Activated B cell treated with CpG ODN at 0.5 μM for 24 hours (primary cell): ENCODE measurements at regions of chr15 and their contacts with region 1.

Region 1: GRCh38 chr15:99275525-99276128 is 24.3 kb downstream of the LRRC28 start:
- DNase-seq: no peak
- ATAC-seq: peak; percentile 34
- H3K4me3 Mint-ChIP-seq: no peak overlapping the region
- H3K27ac Mint-ChIP-seq: no peak overlapping the region
- H3K4me1 Mint-ChIP-seq: peaks cover 10% of the 10 kb centered on the region
- H3K27me3 Mint-ChIP-seq: no peaks in the 10 kb centered on the region
- CTCF ChIP-seq: no peak

Region 2: GRCh38 chr15:99733268-99734039 is 457.8 kb after region 1 on chr15 and contains the start of gene LYSMD4:
- CTCF ChIA-PET with region 1: interaction called, 8 read pairs
- POLR2A ChIA-PET with region 1: no interaction called
- intact Hi-C with region 1: loop called (anchors 1 kb)
- DNase-seq: peak; percentile 95
- ATAC-seq: peak; percentile 99
- H3K4me3 Mint-ChIP-seq: peak within 1 kb of the TSS; percentile 85
- H3K27ac Mint-ChIP-seq: peak within 1 kb of the TSS; percentile 83
- H3K4me1 Mint-ChIP-seq: peaks cover 14% of the 10 kb centered on the region
- H3K27me3 Mint-ChIP-seq: no peaks in the 10 kb centered on the region
- CTCF ChIP-seq: no peak
- total RNA-seq, gene LYSMD4: 4.7 and 6.1 TPM in 2 replicates

Region 3: DNA sequence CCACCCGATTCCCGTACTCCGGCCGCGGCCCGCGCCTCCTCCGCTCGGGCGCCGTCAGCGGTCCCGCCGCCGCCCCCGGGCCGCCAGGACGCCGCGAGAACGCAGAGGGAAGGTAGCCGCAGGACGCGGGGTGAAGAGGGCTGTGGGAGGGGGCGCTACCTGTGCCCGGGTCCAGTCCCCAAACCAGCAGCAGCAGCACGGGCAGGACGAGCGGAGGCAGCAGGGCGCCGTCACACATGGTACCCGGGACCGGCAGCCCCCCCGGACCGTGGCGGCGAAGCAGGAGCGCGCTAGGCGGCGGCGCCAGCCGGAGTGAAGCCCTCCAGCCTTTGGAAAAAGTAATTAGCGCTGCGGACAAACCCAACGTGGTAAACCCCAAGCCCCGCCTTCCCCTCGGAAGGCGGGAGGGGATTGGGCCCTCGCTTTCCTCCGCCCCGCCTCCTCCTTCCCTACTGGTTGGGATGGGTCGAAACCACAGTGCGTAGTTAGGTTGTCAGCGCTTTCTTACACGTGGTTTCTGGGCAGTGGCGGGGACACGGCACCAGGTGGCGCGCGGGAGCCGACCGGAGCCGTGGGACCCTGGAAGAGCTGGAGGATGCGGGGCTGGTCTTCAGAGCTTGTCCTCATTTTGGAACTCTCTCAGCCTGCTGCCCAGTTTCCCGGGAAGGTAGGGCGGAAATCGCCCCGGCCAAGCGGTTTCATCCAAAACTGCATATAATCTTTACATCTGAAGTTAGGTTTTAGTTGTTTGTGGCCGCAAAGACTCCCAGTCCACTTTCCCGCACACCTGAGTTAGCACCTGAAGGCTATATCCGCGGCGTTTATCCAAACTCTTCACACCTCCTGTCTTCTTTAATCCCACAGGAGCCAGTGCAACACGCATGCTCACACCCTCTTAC is 1066.3 kb after region 1 on chr15 and contains the start of gene ADAMTS17:
- CTCF ChIA-PET with region 1: no interaction called
- POLR2A ChIA-PET with region 1: no interaction called
- intact Hi-C with region 1: loop called (anchors 5 kb)
- DNase-seq: peak; percentile 70
- ATAC-seq: peak; percentile 99
- H3K4me3 Mint-ChIP-seq: peak within 1 kb of the TSS; percentile 50
- H3K27ac Mint-ChIP-seq: no peak within 1 kb of the TSS
- H3K4me1 Mint-ChIP-seq: peaks cover 9% of the 10 kb centered on the region
- H3K27me3 Mint-ChIP-seq: peaks cover 29% of the 10 kb centered on the region
- CTCF ChIP-seq: no peak
- total RNA-seq, gene ADAMTS17: 1.6 TPM in 1 of 2 replicates, not detected in the other

Region 4: GRCh38 chr15:100572362-100572983 is 1296.8 kb after region 1 on chr15:
- CTCF ChIA-PET with region 1: interaction called, 8 read pairs
- POLR2A ChIA-PET with region 1: no interaction called
- intact Hi-C with region 1: loop called (anchors 2 kb)
- DNase-seq: no peak
- ATAC-seq: peak; percentile 31
- H3K4me3 Mint-ChIP-seq: no peak overlapping the region
- H3K27ac Mint-ChIP-seq: no peak overlapping the region
- H3K4me1 Mint-ChIP-seq: peaks cover 3% of the 10 kb centered on the region
- H3K27me3 Mint-ChIP-seq: no peaks in the 10 kb centered on the region
- CTCF ChIP-seq: no peak

Region 5: DNA sequence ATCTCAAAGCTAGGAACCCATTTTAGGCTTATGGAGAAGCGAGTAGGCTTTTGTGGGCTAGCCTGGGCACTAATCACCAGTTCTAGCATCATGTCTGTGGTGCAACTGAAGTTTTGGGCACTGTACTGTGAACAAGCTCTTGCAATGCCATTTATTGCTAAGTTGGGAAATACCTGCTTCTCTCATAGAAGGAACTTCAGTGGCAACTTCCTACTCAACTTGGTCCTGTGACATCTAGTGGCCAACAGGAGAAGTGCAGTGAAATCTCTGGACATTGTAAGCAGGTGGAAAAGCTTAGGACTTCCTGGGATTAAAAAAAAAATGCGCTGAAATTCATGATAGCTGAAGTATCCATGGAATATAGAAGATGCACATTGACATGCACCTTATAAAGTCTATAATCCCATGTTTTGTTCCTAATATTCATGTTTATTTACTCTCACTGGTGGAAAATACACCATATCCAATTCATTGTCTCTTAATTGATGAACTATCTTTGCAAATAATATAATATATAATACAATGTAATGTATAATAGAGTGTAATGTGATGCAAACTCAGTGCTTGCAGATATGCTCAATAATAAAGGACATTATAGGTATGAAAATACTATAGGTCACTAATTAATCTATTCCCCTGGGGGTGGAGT is 1597.5 kb after region 1 on chr15:
- CTCF ChIA-PET with region 1: interaction called, 5 read pairs
- POLR2A ChIA-PET with region 1: no interaction called
- intact Hi-C with region 1: loop called (anchors 5 kb)
- DNase-seq: no peak
- ATAC-seq: peak; percentile 71
- H3K4me3 Mint-ChIP-seq: no peak overlapping the region
- H3K27ac Mint-ChIP-seq: no peak overlapping the region
- H3K4me1 Mint-ChIP-seq: no peaks in the 10 kb centered on the region
- H3K27me3 Mint-ChIP-seq: peaks cover 28% of the 10 kb centered on the region
- CTCF ChIP-seq: peak; percentile 60